ENCODE measurements at regions of chr4 and their contacts with region 1.

Region 1: DNA sequence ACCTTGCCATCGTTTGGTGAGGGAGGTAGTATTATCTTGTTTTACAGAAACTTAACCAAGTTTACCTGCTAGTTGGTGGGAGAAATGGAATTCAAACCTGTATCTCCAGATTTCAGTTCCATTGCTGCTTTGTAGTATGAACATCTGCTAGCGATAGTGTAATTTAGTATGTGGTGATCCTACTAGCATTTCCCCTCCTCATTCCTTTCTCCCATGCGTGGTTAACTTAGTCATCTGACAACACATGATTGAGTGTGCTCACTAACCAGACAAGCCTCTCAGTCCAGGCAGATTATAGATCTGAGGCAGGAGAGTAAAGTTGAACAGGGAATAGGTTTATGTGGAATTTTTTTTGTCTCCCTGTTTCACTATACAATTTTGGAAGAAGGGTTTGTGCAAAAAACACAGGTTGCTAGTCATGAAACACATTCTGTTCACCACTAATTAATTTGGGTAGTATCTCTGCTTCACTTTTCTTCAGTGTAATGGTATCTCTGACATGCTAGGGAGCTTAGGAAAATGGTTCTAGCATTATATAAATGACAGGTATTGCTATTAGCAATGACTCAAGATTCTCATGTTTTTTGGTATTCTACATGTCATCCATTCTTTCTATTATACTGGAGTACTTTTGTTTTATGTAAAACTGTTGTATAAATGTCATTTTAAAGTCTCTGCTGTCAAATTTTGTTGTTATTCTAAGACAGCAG is 21.7 kb downstream of the RBPJ start:
- DNase-seq: peak; percentile 7
- H3K4me3 Mint-ChIP-seq: no peak overlapping the region
- H3K27ac Mint-ChIP-seq: no peak overlapping the region
- H3K4me1 Mint-ChIP-seq: peaks cover 32% of the 10 kb centered on the region
- H3K27me3 Mint-ChIP-seq: no peaks in the 10 kb centered on the region
- CTCF ChIP-seq: no peak

Region 2: GRCh38 chr4:26281881-26282280 is 60.6 kb before region 1 on chr4:
- CTCF ChIA-PET with region 1: no interaction called
- intact Hi-C with region 1: no loop called
- DNase-seq: no peak
- H3K4me3 Mint-ChIP-seq: no peak overlapping the region
- H3K27ac Mint-ChIP-seq: no peak overlapping the region
- H3K4me1 Mint-ChIP-seq: no peaks in the 10 kb centered on the region
- H3K27me3 Mint-ChIP-seq: no peaks in the 10 kb centered on the region
- CTCF ChIP-seq: no peak

Region 3: DNA sequence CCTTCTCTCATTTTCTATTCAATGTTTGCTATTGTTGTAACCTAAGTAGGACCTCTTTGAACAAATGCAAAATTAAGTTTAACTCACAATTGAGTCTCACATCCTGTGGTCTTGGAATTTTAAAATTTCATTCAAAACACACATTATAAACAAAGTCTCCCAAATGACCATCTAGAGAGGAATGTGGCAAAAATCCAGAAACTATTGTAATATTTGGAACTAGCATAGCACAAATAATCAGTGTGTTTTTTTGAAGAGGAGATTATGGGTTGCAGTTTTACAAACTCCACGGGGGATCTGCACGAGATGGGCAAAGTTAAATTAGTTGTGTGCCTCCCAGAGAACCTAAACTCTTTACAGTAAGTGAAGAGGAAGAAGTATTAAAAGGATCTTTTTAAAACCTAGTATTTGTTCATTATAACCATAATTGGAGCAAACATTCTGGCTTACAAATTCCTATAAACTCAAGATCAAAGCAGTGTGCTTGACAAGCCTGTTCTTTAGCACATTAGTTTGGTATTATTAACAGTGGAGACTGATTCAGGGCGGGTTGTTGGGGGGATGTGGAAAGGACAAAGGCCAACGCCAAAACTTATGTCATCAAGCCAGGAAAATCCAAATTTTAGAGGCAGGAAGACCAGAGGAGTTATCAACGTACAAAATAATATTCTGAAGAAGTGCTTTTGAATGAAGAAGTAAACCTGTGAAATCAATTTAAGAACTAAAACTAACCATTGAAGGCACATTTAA is 44.1 kb before region 1 on chr4:
- CTCF ChIA-PET with region 1: no interaction called
- intact Hi-C with region 1: no loop called
- DNase-seq: no peak
- H3K4me3 Mint-ChIP-seq: no peak overlapping the region
- H3K27ac Mint-ChIP-seq: no peak overlapping the region
- H3K4me1 Mint-ChIP-seq: no peaks in the 10 kb centered on the region
- H3K27me3 Mint-ChIP-seq: no peaks in the 10 kb centered on the region
- CTCF ChIP-seq: no peak

Region 4: DNA sequence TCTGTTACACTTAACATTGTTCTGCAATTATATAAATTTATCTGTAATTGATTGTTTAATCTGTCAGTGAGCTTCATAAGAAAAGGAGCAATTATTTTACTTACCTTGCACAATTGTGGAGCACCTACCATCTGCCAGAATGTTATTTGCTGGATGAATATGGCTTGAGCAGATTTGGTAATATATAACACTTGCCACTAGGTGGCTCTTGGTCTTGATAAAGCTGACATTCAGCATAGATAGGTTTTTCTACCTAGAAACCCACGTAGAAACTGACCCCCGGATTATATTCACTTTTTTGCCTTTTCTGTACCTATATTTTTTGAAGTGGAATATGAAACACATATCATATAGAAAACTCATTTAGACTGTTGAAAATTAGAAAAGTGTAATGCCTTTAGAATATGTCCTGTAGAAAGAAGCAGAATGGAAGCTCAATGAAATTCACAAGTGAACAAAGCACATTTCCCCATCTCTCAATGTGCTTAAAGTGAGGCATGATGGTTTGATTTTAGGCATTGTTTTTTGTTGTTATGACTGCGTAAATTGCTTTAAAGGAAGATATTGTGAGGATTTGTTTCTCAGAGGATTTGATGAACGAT is 12.2 kb before region 1 on chr4:
- CTCF ChIA-PET with region 1: interaction called, 5 read pairs
- intact Hi-C with region 1: loop called (anchors 1 kb)
- DNase-seq: peak; percentile 15
- H3K4me3 Mint-ChIP-seq: no peak overlapping the region
- H3K27ac Mint-ChIP-seq: no peak overlapping the region
- H3K4me1 Mint-ChIP-seq: peaks cover 19% of the 10 kb centered on the region
- H3K27me3 Mint-ChIP-seq: no peaks in the 10 kb centered on the region
- CTCF ChIP-seq: no peak

Region 5: GRCh38 chr4:26404743-26405206 is 62.3 kb after region 1 on chr4:
- CTCF ChIA-PET with region 1: no interaction called
- intact Hi-C with region 1: loop called (anchors 5 kb)
- DNase-seq: no peak
- H3K4me3 Mint-ChIP-seq: no peak overlapping the region
- H3K27ac Mint-ChIP-seq: no peak overlapping the region
- H3K4me1 Mint-ChIP-seq: peaks cover 8% of the 10 kb centered on the region
- H3K27me3 Mint-ChIP-seq: no peaks in the 10 kb centered on the region
- CTCF ChIP-seq: no peak